Activated T-helper 2 cell treated with anti-CD3 and anti-CD28 coated beads, Interferon-gamma antibody, Interleukin-2, Interleukin-4, amounts not matched to agents 10 μg/mL and 5 μg/mL and 100 μg/mL, durations not matched to agents 14 hours and 24 hours and 36 hours (primary cell): ENCODE measurements at regions of chr2 and their contacts with region 1.

Region 1: GRCh38 chr2:45935791-45936622 is 284.5 kb downstream of the PRKCE start:
- DNase-seq: peak; percentile 30
- H3K4me3 Mint-ChIP-seq: no peak overlapping the region
- H3K27ac Mint-ChIP-seq: no peak overlapping the region
- H3K4me1 Mint-ChIP-seq: peaks cover 7% of the 10 kb centered on the region
- H3K27me3 Mint-ChIP-seq: no peaks in the 10 kb centered on the region

Region 2: DNA sequence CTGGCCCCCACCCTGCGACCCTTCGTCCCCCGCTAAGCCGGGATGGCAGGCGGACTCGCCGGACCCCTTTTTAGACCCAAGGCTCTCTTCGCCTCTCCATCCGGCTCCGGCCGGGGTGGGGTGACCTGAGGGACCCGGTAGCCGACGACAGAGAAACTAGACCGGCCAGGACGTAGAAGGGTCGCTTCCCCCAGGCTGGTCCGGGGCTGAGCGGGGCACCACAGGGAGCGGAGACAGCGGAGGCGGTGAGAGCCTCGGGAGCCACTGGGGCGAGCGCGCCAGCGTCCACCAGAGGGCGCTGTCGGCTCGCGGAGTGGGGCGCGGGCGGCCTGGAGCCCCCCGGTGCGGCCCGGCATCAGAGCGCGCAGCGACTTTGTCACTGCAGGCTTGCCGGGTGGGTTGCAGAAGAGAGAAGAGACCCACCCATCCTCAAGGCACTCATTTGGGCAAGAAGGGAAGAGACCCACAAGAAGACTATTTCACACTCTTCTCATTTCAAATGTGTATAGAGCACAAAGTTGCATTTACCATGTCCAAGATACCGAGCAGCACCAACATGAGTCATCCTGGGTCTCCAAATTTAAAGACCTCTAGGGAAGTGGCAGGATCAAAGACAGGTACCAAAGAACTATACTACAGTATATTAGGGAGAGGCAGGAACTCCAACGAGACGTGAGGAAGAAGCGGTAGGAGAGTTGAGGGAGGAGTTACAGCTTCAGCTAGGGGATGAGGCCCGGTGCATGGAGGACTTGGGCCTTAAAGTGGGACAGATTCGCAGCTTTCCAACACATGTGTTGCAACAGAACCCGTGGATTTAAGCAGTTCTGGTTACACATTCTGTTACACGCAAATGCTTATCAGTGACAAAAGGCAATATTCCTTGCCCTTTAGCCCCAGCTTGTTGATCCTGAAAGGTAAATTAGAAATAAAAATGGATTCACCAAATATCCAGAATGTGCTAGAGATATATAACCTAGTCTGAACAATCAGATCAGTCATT is 292.2 kb before region 1 on chr2:
- intact Hi-C with region 1: loop called (anchors 1 kb)
- DNase-seq: peak; percentile 59
- H3K4me3 Mint-ChIP-seq: peak overlapping the region; percentile 67
- H3K27ac Mint-ChIP-seq: no peak overlapping the region
- H3K4me1 Mint-ChIP-seq: peaks cover 15% of the 10 kb centered on the region
- H3K27me3 Mint-ChIP-seq: peaks cover 38% of the 10 kb centered on the region

Region 3: DNA sequence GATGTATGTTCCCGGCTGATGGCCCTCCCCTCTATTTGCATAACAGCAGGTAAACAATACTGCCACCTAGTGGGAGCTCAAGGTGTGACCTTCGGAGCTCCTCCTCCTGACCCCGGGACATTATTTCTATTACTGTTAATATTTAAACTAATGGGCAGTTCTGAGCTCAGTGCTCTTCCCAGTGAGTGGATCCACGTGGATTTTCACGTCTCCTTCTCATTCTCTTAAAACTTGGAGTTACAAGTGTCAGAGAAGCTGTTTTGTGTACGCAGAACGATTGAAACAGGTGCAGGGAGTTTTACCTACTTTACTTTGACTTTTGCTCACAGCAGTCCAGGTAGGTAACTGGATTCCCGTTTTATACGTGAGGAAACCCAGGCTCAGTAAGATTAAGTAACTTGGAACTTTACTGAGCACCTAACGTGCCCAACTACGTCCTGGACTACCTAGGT is 157.3 kb before region 1 on chr2:
- intact Hi-C with region 1: loop called (anchors 2 kb)
- DNase-seq: peak; percentile 41
- H3K4me3 Mint-ChIP-seq: no peak overlapping the region
- H3K27ac Mint-ChIP-seq: no peak overlapping the region
- H3K4me1 Mint-ChIP-seq: peaks cover 14% of the 10 kb centered on the region
- H3K27me3 Mint-ChIP-seq: no peaks in the 10 kb centered on the region

Region 4: DNA sequence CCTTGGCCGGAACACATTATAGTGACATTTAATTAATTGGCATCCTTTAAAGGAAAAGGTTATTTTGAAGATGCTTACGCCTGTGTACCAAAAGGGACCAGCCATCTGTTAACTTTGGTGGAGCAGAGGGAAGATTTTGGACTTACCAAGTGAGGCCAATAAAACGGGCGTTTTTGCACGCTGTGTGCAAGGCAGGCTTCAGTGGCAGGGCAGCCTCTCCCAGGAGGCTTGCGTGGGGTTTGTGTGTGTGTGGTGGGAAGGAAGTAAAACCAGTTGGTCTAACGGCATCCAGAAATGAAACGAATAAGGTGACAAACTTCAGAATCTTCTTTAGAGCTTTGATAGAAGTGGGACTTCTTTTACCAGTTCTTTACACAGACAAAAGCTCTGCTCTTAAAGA is 92.9 kb before region 1 on chr2:
- intact Hi-C with region 1: loop called (anchors 5 kb)
- DNase-seq: no peak
- H3K4me3 Mint-ChIP-seq: peak overlapping the region; percentile 24
- H3K27ac Mint-ChIP-seq: peak overlapping the region; percentile 67
- H3K4me1 Mint-ChIP-seq: peaks cover 62% of the 10 kb centered on the region
- H3K27me3 Mint-ChIP-seq: no peaks in the 10 kb centered on the region